Heart right ventricle (tissue), 16 donors: ENCODE measurements at regions of chr15 and their contacts with region 1.

Region 1: DNA sequence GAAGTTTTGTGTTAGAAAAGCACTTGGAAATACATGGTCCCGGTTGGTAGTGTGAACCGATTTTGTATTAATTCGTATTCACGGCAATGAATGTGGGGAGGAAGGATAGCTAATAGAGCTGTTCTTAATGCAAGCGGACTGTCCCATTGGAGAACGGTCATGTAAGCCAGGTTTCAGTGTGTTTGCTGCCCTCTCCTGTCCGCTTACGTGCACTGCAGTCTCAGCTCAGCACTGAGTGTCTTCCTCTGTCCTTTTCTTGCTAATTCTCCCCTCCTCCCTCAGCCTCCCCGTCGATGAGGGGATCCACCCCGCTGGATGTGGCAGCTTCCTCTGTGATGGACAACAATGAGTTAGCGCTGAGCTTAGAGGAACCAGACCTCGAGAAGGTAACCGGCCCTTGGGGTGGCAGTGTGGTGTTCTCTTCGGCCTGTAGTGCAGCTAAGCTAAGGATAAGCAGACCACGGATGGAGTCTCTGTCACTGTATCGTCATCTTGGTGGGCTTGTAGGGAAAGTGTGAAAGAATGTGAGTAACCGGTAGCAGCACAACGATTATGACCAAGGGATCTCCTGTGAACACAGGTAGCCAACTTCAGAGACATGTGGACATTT is 267.5 kb upstream of the CHRM5 start:
- DNase-seq: peak; percentile 52 to 55
- ATAC-seq: peak; percentile 80 to 94 (median 90)
- H3K4me3 ChIP-seq: no peak overlapping the region
- H3K27ac ChIP-seq: no peak overlapping the region
- H3K4me1 ChIP-seq: peaks cover 0 to 5% (median 0%) of the 10 kb centered on the region in 9 donors
- H3K27me3 ChIP-seq: peaks cover 0 to 30% (median 10%) of the 10 kb centered on the region in 7 donors
- CTCF ChIP-seq: peak; percentile 57 to 93 (median 89)

Region 2: GRCh38 chr15:33086507-33087121 is 614.2 kb before region 1 on chr15:
- intact Hi-C with region 1: loop called in 9 of 10 experiments (anchors 5 to 10 kb)
- DNase-seq: no peak
- ATAC-seq: peak in 5 of 8 donors; percentile 49 to 64 (median 58)
- H3K4me3 ChIP-seq: no peak overlapping the region
- H3K27ac ChIP-seq: no peak overlapping the region
- H3K4me1 ChIP-seq: peaks cover 0 to 12% (median 0%) of the 10 kb centered on the region in 9 donors
- H3K27me3 ChIP-seq: no peaks in the 10 kb centered on the region
- CTCF ChIP-seq: peak; percentile 7 to 73 (median 63)

Region 3: GRCh38 chr15:33234014-33234461 is 466.8 kb before region 1 on chr15:
- intact Hi-C with region 1: loop called in 5 of 10 experiments (anchors 10 kb)
- DNase-seq: no peak
- ATAC-seq: peak in 1 of 8 donors; percentile 16
- H3K4me3 ChIP-seq: no peak overlapping the region
- H3K27ac ChIP-seq: no peak overlapping the region
- H3K4me1 ChIP-seq: no peaks in the 10 kb centered on the region
- H3K27me3 ChIP-seq: peaks cover 0 to 35% (median 19%) of the 10 kb centered on the region in 7 donors
- CTCF ChIP-seq: peak in 7 of 9 donors; percentile 16 to 52 (median 40)

Region 4: GRCh38 chr15:33292717-33293307 is 408.0 kb before region 1 on chr15:
- intact Hi-C with region 1: loop called in 8 of 10 experiments (anchors 2 to 10 kb)
- DNase-seq: peak in 1 of 2 donors; percentile 42
- ATAC-seq: peak in 5 of 8 donors; percentile 51 to 69 (median 54)
- H3K4me3 ChIP-seq: peak overlapping the region in 1 of 10 donors; percentile 14
- H3K27ac ChIP-seq: no peak overlapping the region
- H3K4me1 ChIP-seq: no peaks in the 10 kb centered on the region
- H3K27me3 ChIP-seq: peaks cover 0 to 8% (median 4%) of the 10 kb centered on the region in 7 donors
- CTCF ChIP-seq: peak; percentile 18 to 77 (median 70)

Region 5: DNA sequence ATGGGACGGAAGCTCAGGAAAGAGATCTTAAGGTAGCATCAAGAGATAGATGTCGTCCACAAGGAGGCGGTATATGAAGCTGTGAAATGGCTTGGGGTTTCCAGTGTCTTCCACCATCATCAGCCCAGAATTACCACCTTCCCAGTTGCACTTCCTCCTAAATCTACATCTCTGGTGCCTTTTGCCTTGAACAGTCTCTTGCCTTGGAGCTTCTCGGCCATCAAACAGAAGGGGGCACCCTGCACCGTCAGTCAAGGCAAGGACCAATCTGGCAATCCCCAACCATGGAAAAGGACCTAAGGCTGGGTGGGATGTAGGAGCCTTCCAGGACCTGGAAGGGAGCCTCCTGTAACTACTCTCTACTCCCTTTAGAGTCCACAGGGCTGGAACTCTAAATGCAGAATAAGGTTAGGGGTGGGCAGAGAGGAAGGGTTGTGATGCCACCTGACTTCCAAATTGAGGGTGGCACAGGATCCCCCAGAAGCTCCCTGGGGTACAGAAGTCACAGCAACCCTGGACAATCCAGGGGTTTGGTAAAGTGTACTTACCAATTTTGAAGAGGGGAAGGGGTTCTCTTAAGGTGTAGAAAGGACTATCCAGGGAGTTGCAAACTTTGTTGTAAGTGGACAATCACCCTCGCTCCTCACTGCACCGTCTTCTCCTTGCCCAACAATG is 391.1 kb before region 1 on chr15:
- intact Hi-C with region 1: loop called in 1 of 10 experiments (anchors 5 kb)
- DNase-seq: peak in 1 of 2 donors; percentile 12
- ATAC-seq: peak in 5 of 8 donors; percentile 31 to 58 (median 52)
- H3K4me3 ChIP-seq: no peak overlapping the region
- H3K27ac ChIP-seq: no peak overlapping the region
- H3K4me1 ChIP-seq: peaks cover 0 to 5% (median 0%) of the 10 kb centered on the region in 9 donors
- H3K27me3 ChIP-seq: peaks cover 7 to 74% (median 50%) of the 10 kb centered on the region in 7 donors
- CTCF ChIP-seq: peak in 7 of 9 donors; percentile 4 to 50 (median 24)

Region 6: GRCh38 chr15:33639978-33640377 is 60.8 kb before region 1 on chr15:
- intact Hi-C with region 1: loop called in 1 of 10 experiments (anchors 10 kb)
- DNase-seq: no peak
- ATAC-seq: no peak
- H3K4me3 ChIP-seq: no peak overlapping the region
- H3K27ac ChIP-seq: no peak overlapping the region
- H3K4me1 ChIP-seq: no peaks in the 10 kb centered on the region
- H3K27me3 ChIP-seq: peaks cover 0 to 19% (median 5%) of the 10 kb centered on the region in 7 donors
- CTCF ChIP-seq: no peak